Activated CD4-positive, alpha-beta T cell treated with anti-CD3 and anti-CD28 coated beads for 36 hours (primary cell): ENCODE measurements at regions of chr11 and their contacts with region 1.

Region 1: DNA sequence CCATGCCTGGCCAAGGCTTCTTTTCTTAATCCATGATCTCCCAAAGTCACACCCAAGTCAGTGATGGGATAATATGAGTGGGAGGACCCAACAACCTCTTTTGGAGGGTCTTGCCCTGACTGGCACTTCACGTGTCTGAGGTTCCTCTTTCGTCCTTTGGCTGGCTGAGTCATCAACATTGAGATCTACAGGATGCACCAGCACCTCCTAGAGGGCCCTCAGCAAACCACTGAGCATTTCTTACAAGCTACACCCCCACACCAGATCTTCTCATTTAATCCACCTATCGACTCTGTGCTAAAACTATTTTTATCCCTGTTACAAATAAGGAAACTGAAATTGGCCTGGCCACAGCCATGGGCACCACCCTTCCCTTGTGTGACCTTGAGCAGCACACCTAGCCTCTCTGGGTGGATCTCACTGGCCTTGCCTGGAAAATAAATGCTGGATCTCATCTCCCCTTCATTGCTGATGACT is 63.4 kb downstream of the FLI1 start:
- DNase-seq: peak; percentile 83
- ATAC-seq: peak; percentile 78
- H3K4me3 Mint-ChIP-seq: peak overlapping the region; percentile 32
- H3K27ac Mint-ChIP-seq: peak overlapping the region; percentile 95
- H3K4me1 Mint-ChIP-seq: peaks cover 79% of the 10 kb centered on the region
- H3K27me3 Mint-ChIP-seq: no peaks in the 10 kb centered on the region

Region 2: DNA sequence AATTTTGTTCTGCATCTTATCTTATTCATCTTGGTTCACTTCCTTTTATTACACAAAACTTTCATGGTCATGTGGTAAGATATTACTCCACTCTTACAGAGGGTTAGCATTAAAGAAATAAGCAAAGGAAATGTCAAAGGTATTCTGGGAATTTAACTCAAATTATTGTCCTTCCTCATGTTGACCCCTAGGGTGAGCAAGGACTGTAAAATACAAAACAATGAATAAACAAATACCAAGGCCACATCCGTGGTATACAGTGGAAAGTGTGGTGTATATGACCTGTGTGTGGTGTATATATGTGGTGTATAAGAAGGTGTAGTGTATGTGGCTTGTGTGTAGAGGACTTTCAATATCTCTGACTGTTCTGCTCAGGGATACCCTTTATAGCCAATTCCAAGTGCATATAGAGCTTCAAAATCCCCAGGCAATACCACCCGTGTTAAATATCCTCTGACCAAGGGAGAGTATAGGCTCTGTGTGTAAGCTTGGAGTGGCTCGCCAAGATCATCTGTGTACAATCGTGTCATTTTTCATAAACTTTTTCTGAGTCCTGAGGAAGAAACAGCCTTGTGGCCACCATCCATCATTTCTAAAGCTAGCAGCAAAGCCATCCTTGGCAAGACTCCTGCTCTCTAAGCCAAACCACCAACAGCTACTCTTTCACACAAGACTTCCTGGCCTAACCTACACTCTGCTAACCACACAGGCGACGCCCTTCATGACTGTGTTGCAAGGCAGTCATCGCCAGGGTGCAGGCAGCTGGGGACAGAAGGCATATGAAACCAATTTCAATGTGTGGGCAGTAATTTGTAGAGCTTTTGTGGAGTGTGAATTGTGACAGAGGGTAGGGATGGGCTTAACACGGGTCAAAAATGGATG is 717.9 kb before region 1 on chr11:
- CTCF ChIA-PET with region 1: no interaction called
- POLR2A ChIA-PET with region 1: no interaction called
- intact Hi-C with region 1: loop called in 1 of 2 experiments (anchors 10 kb)
- DNase-seq: peak; percentile 88
- ATAC-seq: peak; percentile 94
- H3K4me3 Mint-ChIP-seq: peak overlapping the region; percentile 31
- H3K27ac Mint-ChIP-seq: peak overlapping the region; percentile 85
- H3K4me1 Mint-ChIP-seq: peaks cover 39% of the 10 kb centered on the region
- H3K27me3 Mint-ChIP-seq: no peaks in the 10 kb centered on the region

Region 3: GRCh38 chr11:128506999-128507611 is 250.2 kb before region 1 on chr11:
- CTCF ChIA-PET with region 1: no interaction called
- POLR2A ChIA-PET with region 1: interaction called, 4 read pairs
- intact Hi-C with region 1: loop called in 1 of 2 experiments (anchors 5 kb)
- DNase-seq: peak; percentile 80
- ATAC-seq: peak; percentile 58
- H3K4me3 Mint-ChIP-seq: peak overlapping the region; percentile 96
- H3K27ac Mint-ChIP-seq: peak overlapping the region; percentile 98
- H3K4me1 Mint-ChIP-seq: peaks cover 89% of the 10 kb centered on the region
- H3K27me3 Mint-ChIP-seq: no peaks in the 10 kb centered on the region

Region 4: GRCh38 chr11:128695539-128696221 is 61.6 kb before region 1 on chr11:
- CTCF ChIA-PET with region 1: interaction called, 4 read pairs
- POLR2A ChIA-PET with region 1: no interaction called
- intact Hi-C with region 1: loop called (anchors 1 to 2 kb)
- DNase-seq: peak; percentile 49
- ATAC-seq: peak; percentile 24
- H3K4me3 Mint-ChIP-seq: peak overlapping the region; percentile 90
- H3K27ac Mint-ChIP-seq: peak overlapping the region; percentile 94
- H3K4me1 Mint-ChIP-seq: peaks cover 58% of the 10 kb centered on the region
- H3K27me3 Mint-ChIP-seq: peaks cover 9% of the 10 kb centered on the region

Region 5: DNA sequence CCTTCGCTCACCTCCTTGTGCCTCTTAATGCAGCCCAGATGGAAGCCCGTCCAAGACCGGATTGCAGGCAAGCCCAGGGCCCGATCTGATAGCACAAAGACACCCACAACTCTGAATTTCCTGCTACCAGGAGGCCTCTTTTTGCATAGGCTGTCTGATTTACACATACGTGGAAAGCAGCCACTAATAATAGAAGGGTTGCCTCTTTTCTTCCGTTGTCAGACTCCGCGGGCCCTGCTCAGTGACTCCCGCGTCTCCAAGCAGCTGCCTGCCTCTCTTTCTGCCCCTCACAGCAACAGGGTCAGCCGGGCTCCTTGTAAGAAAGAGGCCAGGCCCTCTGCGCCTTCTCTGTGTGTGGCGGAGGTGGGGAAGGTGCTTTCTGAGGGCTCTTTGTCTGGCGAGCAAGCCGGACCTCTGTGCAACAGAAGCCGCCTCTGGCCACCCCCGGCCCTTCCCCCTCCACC is 36.7 kb before region 1 on chr11:
- CTCF ChIA-PET with region 1: interaction called, 15 read pairs
- POLR2A ChIA-PET with region 1: interaction called, 3 read pairs
- intact Hi-C with region 1: loop called (anchors 1 to 5 kb)
- DNase-seq: peak; percentile 73
- ATAC-seq: peak; percentile 68
- H3K4me3 Mint-ChIP-seq: peak overlapping the region; percentile 69
- H3K27ac Mint-ChIP-seq: peak overlapping the region; percentile 96
- H3K4me1 Mint-ChIP-seq: peaks cover 98% of the 10 kb centered on the region
- H3K27me3 Mint-ChIP-seq: no peaks in the 10 kb centered on the region

Region 6: DNA sequence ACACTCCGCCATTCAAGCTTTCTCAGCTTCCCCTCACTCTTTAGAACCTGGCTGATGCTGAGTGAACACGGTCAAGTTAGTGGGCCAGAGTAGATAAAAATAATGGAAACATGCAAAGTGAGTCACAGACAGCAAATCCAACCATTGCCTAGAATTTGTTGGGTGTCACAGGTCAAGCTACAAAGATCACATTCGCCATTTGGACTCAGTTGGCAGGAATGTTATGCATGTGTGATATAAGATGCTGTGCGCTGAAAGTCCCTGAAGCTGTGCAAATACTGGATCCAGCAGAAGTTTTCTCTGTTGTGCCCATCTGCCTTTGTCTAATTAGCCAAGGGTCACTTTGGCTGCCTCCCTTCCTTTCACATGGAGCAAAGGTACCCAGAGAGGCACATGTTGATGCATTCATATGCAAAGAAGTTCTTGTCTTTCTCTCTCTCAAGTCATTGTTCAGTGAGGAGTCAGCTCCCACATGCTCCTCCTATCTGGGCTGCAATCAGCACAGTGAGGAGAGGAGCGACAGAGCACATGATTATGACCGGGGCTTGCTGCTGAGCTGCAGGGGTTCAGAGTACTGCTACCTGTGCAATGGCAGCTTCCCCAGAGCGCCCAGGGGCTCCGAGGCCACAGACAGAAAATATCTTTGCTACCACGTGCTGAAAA is 23.7 kb before region 1 on chr11:
- CTCF ChIA-PET with region 1: interaction called, 22 read pairs
- POLR2A ChIA-PET with region 1: no interaction called
- intact Hi-C with region 1: loop called in 1 of 2 experiments (anchors 2 kb)
- DNase-seq: peak; percentile 61
- ATAC-seq: peak; percentile 66
- H3K4me3 Mint-ChIP-seq: peak overlapping the region; percentile 59
- H3K27ac Mint-ChIP-seq: peak overlapping the region; percentile 78
- H3K4me1 Mint-ChIP-seq: peaks cover 99% of the 10 kb centered on the region
- H3K27me3 Mint-ChIP-seq: no peaks in the 10 kb centered on the region

Region 7: DNA sequence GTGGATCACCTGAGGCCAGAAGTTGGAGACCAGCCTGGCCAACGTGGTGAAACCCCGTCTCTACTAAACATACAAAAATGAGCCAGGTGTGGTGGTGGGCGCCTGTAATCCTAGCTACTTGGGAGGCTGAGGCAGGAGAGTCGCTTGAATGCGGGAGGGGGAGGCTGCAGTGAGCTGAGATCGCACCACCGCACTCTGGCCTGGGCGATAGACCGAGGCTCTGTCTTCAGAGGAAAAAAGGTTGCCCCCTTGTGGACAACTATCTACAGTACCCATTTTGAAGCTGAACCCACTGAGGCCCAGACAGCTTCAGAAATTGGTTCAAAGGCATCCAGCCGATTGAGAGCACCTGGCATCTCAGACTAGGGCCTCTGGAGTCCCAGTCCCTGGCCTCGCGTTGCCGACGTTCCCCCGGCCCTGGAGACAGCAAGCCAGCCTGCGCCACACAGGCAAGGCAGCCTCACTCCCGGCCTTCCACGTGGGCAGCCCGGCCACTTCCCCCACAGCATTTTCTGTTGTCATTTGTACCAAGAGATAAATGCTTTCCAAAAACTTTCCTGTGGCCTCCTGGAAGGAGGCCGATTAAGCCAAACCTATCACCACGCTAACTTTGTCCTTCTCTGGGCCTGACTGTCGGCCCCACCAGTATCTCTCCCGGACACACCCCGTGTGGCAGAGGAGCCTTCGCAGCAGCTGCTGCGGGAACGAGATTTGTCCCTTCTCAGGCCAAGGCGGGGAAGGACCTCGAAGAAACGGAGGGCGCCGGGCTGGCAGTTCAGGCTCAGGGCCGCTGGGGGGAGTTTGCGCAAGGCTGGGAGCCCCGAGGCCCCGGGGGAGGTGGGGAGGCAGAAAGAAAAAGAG is 19.4 kb after region 1 on chr11:
- CTCF ChIA-PET with region 1: interaction called, 12 read pairs
- POLR2A ChIA-PET with region 1: no interaction called
- intact Hi-C with region 1: no loop called
- DNase-seq: peak; percentile 59
- ATAC-seq: peak; percentile 74
- H3K4me3 Mint-ChIP-seq: no peak overlapping the region
- H3K27ac Mint-ChIP-seq: peak overlapping the region; percentile 43
- H3K4me1 Mint-ChIP-seq: peaks cover 47% of the 10 kb centered on the region
- H3K27me3 Mint-ChIP-seq: no peaks in the 10 kb centered on the region

Region 8: DNA sequence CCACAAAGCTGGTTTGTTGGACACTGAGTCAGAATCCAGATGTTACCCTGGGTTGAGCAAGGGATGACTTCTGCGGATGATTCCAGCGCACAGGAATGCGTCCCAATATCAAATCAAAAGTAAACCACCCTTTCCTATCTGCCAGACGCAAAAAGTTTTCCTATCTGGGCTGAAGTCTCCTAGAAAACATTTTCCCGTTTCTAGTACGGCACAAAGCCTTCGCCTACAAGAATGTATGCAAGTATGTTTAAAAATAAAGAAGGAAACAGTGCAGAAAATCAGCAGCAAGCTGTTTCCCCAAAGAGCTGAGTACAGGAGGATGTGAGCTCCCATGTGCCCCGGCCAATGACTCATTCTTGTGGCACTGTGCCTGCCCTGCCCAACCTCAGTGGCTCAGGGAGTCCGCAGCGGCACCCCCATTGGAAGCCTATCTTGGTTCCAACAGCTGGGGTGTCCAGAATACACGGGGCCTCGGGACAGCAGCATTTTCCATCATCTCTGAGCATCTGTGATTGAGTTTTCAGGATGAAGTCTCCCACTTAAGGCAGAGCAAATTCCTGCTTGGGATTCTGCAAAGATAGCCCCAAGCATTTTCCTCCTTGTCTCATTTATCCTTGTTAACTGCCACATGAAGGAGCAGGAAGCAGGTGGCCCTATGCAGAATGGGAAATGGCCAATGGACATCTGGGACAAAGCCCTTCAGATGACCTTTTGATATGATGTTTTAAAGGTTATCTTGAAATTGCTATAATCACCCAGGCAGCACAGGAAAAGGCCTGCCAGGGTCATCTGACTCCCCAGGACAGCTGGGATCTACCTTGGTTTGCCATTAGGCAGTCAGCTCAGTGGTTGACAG is 151.3 kb after region 1 on chr11:
- CTCF ChIA-PET with region 1: no interaction called
- POLR2A ChIA-PET with region 1: no interaction called
- intact Hi-C with region 1: no loop called
- DNase-seq: peak; percentile 35
- ATAC-seq: no peak
- H3K4me3 Mint-ChIP-seq: no peak overlapping the region
- H3K27ac Mint-ChIP-seq: no peak overlapping the region
- H3K4me1 Mint-ChIP-seq: peaks cover 6% of the 10 kb centered on the region
- H3K27me3 Mint-ChIP-seq: peaks cover 45% of the 10 kb centered on the region